ENCODE measurements at regions of chr6 and their contacts with region 1.

Region 1: GRCh38 chr6:53059648-53060589 is 5.3 kb upstream of the FBXO9 start:
- DNase-seq: no peak
- ATAC-seq: no peak
- H3K4me3 ChIP-seq: peak overlapping the region; percentile 75
- H3K27ac ChIP-seq: peak overlapping the region; percentile 47; the same call in 1 of the 2 replicates
- H3K4me1 ChIP-seq: peaks cover 8% of the 10 kb centered on the region
- H3K27me3 ChIP-seq: no peaks in the 10 kb centered on the region
- CTCF ChIP-seq: no peak
- POLR2A ChIP-seq: no peak
- RAD21 ChIP-seq: no peak

Region 2: GRCh38 chr6:52724406-52725121 is 335.4 kb before region 1 on chr6:
- CTCF ChIA-PET with region 1: no interaction called
- POLR2A ChIA-PET with region 1: no interaction called
- dilution Hi-C with region 1: no loop called
- in situ Hi-C with region 1: no loop called
- intact Hi-C with region 1: loop called (anchors 1 kb)
- DNase-seq: peak; percentile 60
- ATAC-seq: peak; percentile 85
- H3K4me3 ChIP-seq: no peak overlapping the region
- H3K27ac ChIP-seq: no peak overlapping the region
- H3K4me1 ChIP-seq: no peaks in the 10 kb centered on the region; the same call in 1 of the 2 replicates
- H3K27me3 ChIP-seq: no peaks in the 10 kb centered on the region; the same call in 1 of the 2 replicates
- CTCF ChIP-seq: peak; percentile 65
- POLR2A ChIP-seq: no peak
- RAD21 ChIP-seq: peak; percentile 55

Region 3: GRCh38 chr6:53042112-53042511 is 17.8 kb before region 1 on chr6:
- CTCF ChIA-PET with region 1: interaction called, 5 read pairs
- POLR2A ChIA-PET with region 1: no interaction called
- dilution Hi-C with region 1: no loop called
- in situ Hi-C with region 1: no loop called
- intact Hi-C with region 1: loop called (anchors 1 kb)
- DNase-seq: peak; percentile 95
- ATAC-seq: peak; percentile 70
- H3K4me3 ChIP-seq: no peak overlapping the region
- H3K27ac ChIP-seq: peak overlapping the region; percentile 54; the same call in 1 of the 2 replicates
- H3K4me1 ChIP-seq: peaks cover 19% of the 10 kb centered on the region
- H3K27me3 ChIP-seq: no peaks in the 10 kb centered on the region
- CTCF ChIP-seq: no peak
- POLR2A ChIP-seq: no peak
- RAD21 ChIP-seq: no peak

Region 4: DNA sequence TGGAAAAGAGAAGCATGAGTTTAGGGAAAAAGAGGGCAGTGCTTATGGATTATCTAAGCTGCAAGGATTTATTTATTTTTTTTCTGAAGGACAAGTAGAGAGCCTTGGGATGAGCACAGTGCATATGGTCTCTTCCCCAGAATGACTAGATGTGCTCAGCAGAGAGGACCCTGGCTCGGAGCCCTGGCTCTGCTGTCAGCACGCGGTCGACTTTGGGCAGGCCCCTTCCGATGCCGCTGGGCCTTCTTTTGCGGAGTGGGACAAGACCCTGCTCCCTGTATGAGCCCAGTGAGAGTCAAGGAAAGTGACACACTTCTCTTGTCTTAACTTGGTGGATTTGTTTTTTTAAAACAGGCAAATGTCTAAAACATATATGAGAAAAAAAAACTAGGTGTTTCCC is 786.3 kb after region 1 on chr6:
- CTCF ChIA-PET with region 1: no interaction called
- POLR2A ChIA-PET with region 1: no interaction called
- dilution Hi-C with region 1: no loop called
- in situ Hi-C with region 1: no loop called
- intact Hi-C with region 1: no loop called
- DNase-seq: no peak
- ATAC-seq: no peak
- H3K4me3 ChIP-seq: no peak overlapping the region
- H3K27ac ChIP-seq: no peak overlapping the region
- H3K4me1 ChIP-seq: no peaks in the 10 kb centered on the region
- H3K27me3 ChIP-seq: no peaks in the 10 kb centered on the region
- CTCF ChIP-seq: no peak
- POLR2A ChIP-seq: no peak
- RAD21 ChIP-seq: no peak